A549 (cell line): ENCODE measurements at regions of chr22 and their contacts with region 1.

Region 1: GRCh38 chr22:33302049-33302545 is 243.9 kb upstream of the SYN3 start:
- DNase-seq: peak; percentile 32 to 70
- ATAC-seq: peak; percentile 97 to 98
- H3K4me3 ChIP-seq: no peak overlapping the region
- H3K27ac ChIP-seq: peak overlapping the region; percentile 60 to 68; a peak in 5 of 6 replicates
- H3K4me1 ChIP-seq: peaks cover 9% of the 10 kb centered on the region
- CTCF ChIP-seq: peak; percentile 79
- EP300 ChIP-seq: no peak
- POLR2A ChIP-seq: no peak
- RAD21 ChIP-seq: peak; percentile 95 to 96

Region 2: DNA sequence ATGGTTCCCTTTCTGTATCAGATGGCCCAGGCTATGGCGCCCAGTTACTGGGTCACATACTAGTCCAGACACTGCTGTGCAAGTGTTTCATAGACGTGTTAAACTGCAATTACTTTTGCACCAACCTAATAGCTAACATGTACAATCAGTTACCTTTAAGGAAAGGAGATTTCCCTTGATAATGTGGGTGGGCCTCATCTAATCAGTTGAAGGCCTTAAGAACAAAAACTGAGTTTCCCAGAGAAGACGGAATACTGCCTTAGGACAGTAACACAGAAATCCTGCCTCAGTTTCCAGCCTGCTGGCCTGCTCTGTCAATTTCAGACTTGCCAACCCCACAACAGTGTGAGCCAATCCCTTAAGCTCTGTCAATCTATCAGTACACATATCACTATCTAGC is 14.0 kb before region 1 on chr22:
- CTCF ChIA-PET with region 1: interaction called, 13 read pairs
- POLR2A ChIA-PET with region 1: no interaction called
- DNase-seq: no peak
- ATAC-seq: no peak
- H3K4me3 ChIP-seq: no peak overlapping the region
- H3K27ac ChIP-seq: no peak overlapping the region
- H3K4me1 ChIP-seq: no peaks in the 10 kb centered on the region
- CTCF ChIP-seq: no peak
- EP300 ChIP-seq: no peak
- POLR2A ChIP-seq: no peak
- RAD21 ChIP-seq: no peak

Region 3: GRCh38 chr22:33314316-33314715 is 12.2 kb after region 1 on chr22:
- CTCF ChIA-PET with region 1: interaction called, 22 read pairs
- POLR2A ChIA-PET with region 1: no interaction called
- DNase-seq: no peak
- ATAC-seq: no peak
- H3K4me3 ChIP-seq: no peak overlapping the region
- H3K27ac ChIP-seq: no peak overlapping the region
- H3K4me1 ChIP-seq: no peaks in the 10 kb centered on the region
- CTCF ChIP-seq: no peak
- EP300 ChIP-seq: no peak
- POLR2A ChIP-seq: no peak
- RAD21 ChIP-seq: no peak

Region 4: GRCh38 chr22:33467620-33468095 is 165.6 kb after region 1 on chr22:
- CTCF ChIA-PET with region 1: interaction called, 19 read pairs
- POLR2A ChIA-PET with region 1: no interaction called
- DNase-seq: no peak
- ATAC-seq: no peak
- H3K4me3 ChIP-seq: no peak overlapping the region
- H3K27ac ChIP-seq: no peak overlapping the region
- H3K4me1 ChIP-seq: no peaks in the 10 kb centered on the region
- CTCF ChIP-seq: no peak
- EP300 ChIP-seq: no peak
- POLR2A ChIP-seq: no peak
- RAD21 ChIP-seq: peak; percentile 25 to 36; a peak in 3 of 5 replicates

Region 5: DNA sequence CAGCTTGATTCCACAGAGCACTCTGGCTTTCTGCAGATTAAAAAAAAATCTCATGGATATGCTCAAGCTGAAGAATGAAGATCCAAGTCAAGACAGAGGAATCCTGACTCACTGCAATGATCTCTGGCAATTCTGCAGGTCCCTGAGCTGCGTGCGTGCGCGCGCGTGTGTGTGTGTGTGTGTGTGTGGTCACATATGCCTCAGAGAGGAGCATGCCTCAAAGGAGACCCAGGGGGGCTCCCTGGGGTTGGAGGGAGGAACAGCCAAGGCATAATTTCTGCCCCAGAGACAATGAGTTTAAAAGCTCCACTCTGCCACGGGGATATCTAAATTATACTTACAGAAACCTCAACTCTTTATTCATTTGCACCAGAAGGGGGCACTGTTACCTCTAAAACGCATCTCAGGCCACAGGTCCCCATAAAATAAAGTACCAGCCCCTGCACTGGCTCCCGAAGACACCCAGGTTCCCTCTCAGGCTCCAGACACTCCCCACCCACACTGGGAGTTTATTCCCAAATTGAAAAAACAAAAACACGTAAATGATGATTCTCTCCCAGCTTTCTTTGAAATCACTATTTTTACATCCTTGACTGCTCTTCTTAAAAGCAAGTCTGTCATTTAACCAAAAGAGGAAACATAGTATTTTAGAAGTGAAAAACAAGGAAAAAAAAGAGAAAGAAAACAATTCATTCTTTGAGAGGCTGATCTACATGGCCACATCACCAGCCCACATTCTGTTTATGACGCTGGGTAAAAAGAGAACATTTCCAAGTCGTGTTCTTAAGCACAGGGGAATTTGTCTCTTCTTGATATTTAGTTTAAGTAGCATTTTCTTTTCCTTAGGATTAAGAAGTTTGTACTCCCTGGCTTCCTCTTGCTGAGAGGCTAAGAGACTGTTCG is 217.2 kb after region 1 on chr22:
- CTCF ChIA-PET with region 1: interaction called, 20 read pairs
- POLR2A ChIA-PET with region 1: no interaction called
- DNase-seq: peak; percentile 46 to 71
- ATAC-seq: peak; percentile 77 to 88
- H3K4me3 ChIP-seq: no peak overlapping the region
- H3K27ac ChIP-seq: peak overlapping the region; percentile 53 to 74; a peak in 5 of 6 replicates
- H3K4me1 ChIP-seq: peaks cover 21% of the 10 kb centered on the region
- CTCF ChIP-seq: peak; percentile 59
- EP300 ChIP-seq: no peak
- POLR2A ChIP-seq: no peak
- RAD21 ChIP-seq: peak; percentile 77 to 85

Region 6: GRCh38 chr22:33579448-33580093 is 277.5 kb after region 1 on chr22:
- CTCF ChIA-PET with region 1: interaction called, 30 read pairs
- POLR2A ChIA-PET with region 1: no interaction called
- DNase-seq: peak; percentile 41 to 68
- ATAC-seq: peak; percentile 91 to 97
- H3K4me3 ChIP-seq: no peak overlapping the region
- H3K27ac ChIP-seq: peak overlapping the region; percentile 11 to 64; a peak in 5 of 6 replicates
- H3K4me1 ChIP-seq: peaks cover 38% of the 10 kb centered on the region
- CTCF ChIP-seq: peak; percentile 72
- EP300 ChIP-seq: no peak
- POLR2A ChIP-seq: no peak
- RAD21 ChIP-seq: peak; percentile 88 to 91

Region 7: DNA sequence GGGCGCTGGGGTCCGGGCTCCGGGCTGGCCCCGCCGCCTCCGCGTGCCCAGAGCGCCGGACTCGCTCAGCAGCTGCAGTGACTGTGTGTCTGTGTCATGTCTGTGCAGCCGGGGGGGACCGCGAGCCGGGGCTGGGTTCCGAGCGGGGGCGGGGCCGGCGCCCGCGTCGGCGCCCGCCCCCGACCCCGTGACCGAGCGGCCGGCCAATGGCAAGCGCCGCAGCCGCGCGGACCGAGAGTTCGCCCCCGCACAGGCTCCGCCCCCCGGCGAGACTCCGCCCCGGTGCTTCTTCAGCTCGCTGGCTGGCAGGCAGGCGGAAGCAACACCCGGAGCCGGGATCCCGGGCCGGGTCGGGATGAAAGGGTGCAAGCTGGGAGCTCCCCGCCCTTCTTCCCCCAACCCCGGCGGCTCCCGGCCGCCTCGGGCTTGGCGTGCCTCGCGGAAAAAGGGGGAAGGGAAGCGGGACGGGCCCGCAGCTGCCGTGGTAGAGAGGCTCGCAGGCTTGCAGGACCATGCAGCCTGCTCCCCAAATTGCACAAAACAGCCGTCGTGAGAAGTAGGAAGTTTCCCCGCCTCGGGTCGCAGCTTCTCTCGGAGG is 618.9 kb after region 1 on chr22:
- CTCF ChIA-PET with region 1: interaction called, 17 read pairs
- POLR2A ChIA-PET with region 1: no interaction called
- DNase-seq: peak; percentile 51 to 85
- ATAC-seq: peak; percentile 85 to 92
- H3K4me3 ChIP-seq: peak overlapping the region; percentile 66
- H3K27ac ChIP-seq: peak overlapping the region; percentile 68 to 91
- H3K4me1 ChIP-seq: peaks cover 9% of the 10 kb centered on the region; the same call in 2 of the 3 replicates
- CTCF ChIP-seq: no peak
- EP300 ChIP-seq: no peak
- POLR2A ChIP-seq: peak; percentile 73
- RAD21 ChIP-seq: no peak